A549 (cell line): ENCODE measurements at regions of chr3 and their contacts with region 1.

Region 1: DNA sequence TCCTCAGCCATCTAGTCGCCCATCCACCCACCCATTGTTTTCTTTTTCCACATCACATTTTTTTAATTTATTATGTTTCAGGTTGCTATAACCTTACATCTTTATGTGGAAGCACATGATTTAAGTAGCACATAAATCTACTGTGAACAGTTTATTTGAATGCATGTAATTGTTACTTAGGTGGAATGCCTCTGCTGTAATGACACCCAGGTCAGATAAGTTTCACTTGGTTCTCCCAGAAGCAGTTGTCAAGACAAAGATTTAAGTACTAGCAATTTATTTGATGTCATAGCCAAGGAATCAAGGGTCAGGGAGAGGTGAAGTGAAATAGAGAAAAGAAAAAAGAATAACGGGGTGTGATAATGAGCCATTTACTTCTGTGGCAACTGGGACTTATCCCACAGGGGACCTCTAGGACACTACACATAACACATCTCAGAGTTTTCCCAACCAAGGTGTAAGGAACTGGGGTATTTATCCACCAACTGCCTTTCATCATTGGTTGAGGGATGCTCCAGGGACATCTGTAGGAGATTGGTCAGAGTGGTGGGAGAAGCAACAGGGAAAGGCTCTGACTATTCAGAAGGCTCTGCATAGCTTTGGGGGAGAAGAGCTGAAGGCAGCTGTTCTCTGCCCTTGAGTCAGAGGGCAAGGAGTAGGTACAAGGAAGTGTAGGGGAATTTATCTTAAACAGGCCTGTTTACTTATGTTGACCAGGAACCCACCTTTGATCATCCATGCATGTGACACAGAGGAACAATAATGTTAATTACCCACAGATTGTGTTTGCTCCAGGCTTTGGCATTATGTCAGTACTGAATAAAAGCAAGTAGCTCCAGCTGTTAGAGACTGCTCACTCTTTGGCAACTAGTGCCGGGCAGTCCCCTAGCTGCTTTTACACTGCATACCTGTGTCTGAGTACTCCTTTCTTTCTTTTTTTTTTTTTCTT is 94.8 kb downstream of the CD200R1L start:
- DNase-seq: peak in 1 of 2 experiments; percentile 81
- ATAC-seq: peak; percentile 85 to 91
- H3K4me3 ChIP-seq: no peak overlapping the region
- H3K27ac ChIP-seq: peak overlapping the region; percentile 57 to 74
- H3K4me1 ChIP-seq: peaks cover 50% of the 10 kb centered on the region
- CTCF ChIP-seq: no peak
- EP300 ChIP-seq: peak; percentile 25 to 36; a peak in 1 of 5 replicates
- POLR2A ChIP-seq: no peak
- RAD21 ChIP-seq: no peak; a peak in 1 of 5 replicates

Region 2: DNA sequence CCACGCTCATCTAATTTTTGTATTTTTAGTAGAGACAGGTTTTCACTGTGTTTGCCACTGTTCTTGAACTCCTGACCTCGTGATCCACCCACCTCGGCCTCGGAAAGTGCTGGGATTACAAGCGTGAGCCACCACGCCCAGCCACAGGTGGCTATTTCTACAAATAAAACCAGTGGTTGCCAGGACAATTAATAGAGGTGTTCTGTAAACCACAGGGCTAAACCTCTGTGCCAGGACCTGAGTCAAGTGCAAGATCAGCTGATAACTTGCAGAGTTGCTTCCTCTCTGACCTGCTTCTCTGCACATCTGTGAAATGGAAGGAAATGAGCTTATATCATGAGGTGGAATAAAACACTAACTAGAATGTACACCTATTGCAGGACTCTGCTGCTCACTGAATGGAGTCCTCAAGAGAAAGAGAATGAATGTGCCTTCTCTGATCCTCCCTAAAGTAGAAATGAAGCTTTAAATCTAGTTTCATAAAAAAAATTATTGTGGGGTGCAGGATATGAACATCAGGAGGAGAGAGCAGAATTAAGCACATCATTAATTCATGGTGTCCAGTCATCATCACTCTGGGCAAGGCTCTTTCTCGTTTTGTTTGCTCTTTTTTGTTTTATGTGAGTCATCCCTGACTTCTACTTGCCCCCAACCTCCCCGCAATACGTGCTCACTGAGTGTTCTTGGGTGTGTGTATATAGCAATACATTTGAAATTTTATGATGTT is 22.2 kb after region 1 on chr3:
- CTCF ChIA-PET with region 1: interaction called, 17 read pairs
- POLR2A ChIA-PET with region 1: interaction called, 4 read pairs
- DNase-seq: peak; percentile 48 to 91
- ATAC-seq: peak; percentile 81 to 84
- H3K4me3 ChIP-seq: no peak overlapping the region
- H3K27ac ChIP-seq: peak overlapping the region; percentile 87 to 96
- H3K4me1 ChIP-seq: peaks cover 71% of the 10 kb centered on the region
- CTCF ChIP-seq: no peak
- EP300 ChIP-seq: peak; percentile 58 to 66; a peak in 2 of 5 replicates
- POLR2A ChIP-seq: no peak
- RAD21 ChIP-seq: peak in 1 of 2 experiments; percentile 24; a peak in 1 of 5 replicates

Region 3: GRCh38 chr3:112794622-112795172 is 42.9 kb after region 1 on chr3:
- CTCF ChIA-PET with region 1: no interaction called
- POLR2A ChIA-PET with region 1: no interaction called
- DNase-seq: no peak
- ATAC-seq: peak in 1 of 2 experiments; percentile 24; a peak in 1 of 6 replicates
- H3K4me3 ChIP-seq: no peak overlapping the region
- H3K27ac ChIP-seq: peak overlapping the region; percentile 20 to 61; a peak in 2 of 6 replicates
- H3K4me1 ChIP-seq: peaks cover 23% of the 10 kb centered on the region
- CTCF ChIP-seq: no peak
- EP300 ChIP-seq: no peak
- POLR2A ChIP-seq: no peak
- RAD21 ChIP-seq: no peak

Region 4: DNA sequence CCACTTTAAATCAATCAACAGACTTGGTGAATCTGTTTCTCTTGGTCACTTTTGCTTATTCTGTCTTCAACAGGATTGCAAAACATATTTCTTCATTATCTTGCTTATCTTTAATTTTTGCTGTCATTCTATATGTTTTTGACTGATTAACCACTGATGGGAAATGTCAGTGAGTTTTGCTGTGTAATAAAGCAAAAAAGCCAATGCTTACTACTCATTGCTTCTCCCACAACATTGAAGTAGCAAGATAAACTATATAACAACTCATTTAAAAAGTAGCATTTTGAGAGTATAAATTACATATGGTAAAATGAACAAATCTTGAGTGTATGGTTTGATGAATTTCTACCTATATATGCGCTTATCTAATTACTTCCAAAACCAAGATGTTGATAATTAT is 93.9 kb after region 1 on chr3:
- CTCF ChIA-PET with region 1: no interaction called
- POLR2A ChIA-PET with region 1: no interaction called
- DNase-seq: no peak
- ATAC-seq: no peak
- H3K4me3 ChIP-seq: no peak overlapping the region
- H3K27ac ChIP-seq: no peak overlapping the region
- H3K4me1 ChIP-seq: no peaks in the 10 kb centered on the region
- CTCF ChIP-seq: no peak
- EP300 ChIP-seq: no peak
- POLR2A ChIP-seq: no peak
- RAD21 ChIP-seq: no peak